Naive thymus-derived CD4-positive, alpha-beta T cell (primary cell): ENCODE measurements at regions of chr11 and their contacts with region 1.

Region 1: GRCh38 chr11:74069147-74070047 is 60.5 kb upstream of the UCP3 start:
- DNase-seq: no peak
- ATAC-seq: no peak
- H3K4me3 ChIP-seq: no peak overlapping the region
- H3K4me3 Mint-ChIP-seq: no peak overlapping the region
- H3K27ac ChIP-seq: no peak overlapping the region
- H3K27ac Mint-ChIP-seq: peak overlapping the region in 1 of 9 donors; percentile 39
- H3K4me1 ChIP-seq: no peaks in the 10 kb centered on the region
- H3K4me1 Mint-ChIP-seq: peaks cover 0 to 12% (median 5%) of the 10 kb centered on the region in 7 donors
- H3K27me3 ChIP-seq: no peaks in the 10 kb centered on the region
- H3K27me3 Mint-ChIP-seq: no peaks in the 10 kb centered on the region

Region 2: DNA sequence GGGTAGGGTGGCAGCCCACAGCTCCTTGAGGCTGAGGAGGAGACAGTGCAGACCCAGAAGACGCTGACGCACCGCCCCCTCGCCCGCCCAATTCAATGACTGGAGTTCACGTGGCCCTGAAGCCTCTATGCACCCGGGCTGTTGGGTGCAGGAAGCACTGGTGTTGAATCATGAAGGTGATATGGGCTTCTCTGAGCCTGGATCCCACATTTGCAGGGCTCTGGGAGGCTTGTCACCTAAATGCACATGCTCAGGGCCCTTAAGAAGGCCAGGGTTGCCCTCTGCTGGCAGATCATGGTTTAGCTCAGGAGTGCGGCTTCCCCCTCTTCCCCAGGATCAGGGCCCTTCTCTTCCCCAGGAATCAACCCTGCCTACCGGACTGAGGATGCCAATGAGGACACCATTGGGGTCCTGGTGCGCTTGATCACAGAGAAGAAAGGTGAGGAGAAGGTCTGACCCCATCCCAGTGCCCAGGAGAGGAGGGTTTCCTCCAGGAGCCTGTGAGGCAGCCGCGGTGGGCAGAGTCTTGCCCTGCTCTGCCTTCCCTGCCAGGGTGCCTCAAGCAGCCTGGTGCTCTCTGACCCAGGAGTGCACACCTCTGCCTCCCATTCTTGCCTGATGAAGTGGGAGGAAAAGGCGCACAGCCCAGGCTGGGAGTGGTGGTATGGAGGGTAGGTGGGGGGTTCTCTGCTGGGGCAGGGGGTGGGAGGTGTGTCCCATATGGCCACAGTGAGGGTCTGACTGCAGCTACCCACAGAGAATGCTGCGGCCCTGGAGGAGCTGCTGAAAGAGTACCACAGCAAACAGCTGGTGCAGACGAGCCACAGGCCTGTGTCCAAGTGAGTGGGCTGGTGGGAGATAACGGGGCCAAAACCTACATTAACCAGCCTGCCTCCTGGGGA is 675.7 kb before region 1 on chr11:
- CTCF ChIA-PET with region 1: interaction called, 10 read pairs
- POLR2A ChIA-PET with region 1: no interaction called
- intact Hi-C with region 1: no loop called
- DNase-seq: peak; percentile 43 to 74 (median 62)
- ATAC-seq: peak; percentile 69
- H3K4me3 ChIP-seq: no peak overlapping the region
- H3K4me3 Mint-ChIP-seq: peak overlapping the region in 1 of 10 donors; percentile 9
- H3K27ac ChIP-seq: no peak overlapping the region
- H3K27ac Mint-ChIP-seq: peak overlapping the region in 7 of 9 donors; percentile 14 to 75 (median 56)
- H3K4me1 ChIP-seq: no peaks in the 10 kb centered on the region
- H3K4me1 Mint-ChIP-seq: peaks cover 0 to 21% (median 5%) of the 10 kb centered on the region in 7 donors
- H3K27me3 ChIP-seq: no peaks in the 10 kb centered on the region
- H3K27me3 Mint-ChIP-seq: no peaks in the 10 kb centered on the region

Region 3: GRCh38 chr11:73921180-73921579 is 148.2 kb before region 1 on chr11:
- CTCF ChIA-PET with region 1: no interaction called
- POLR2A ChIA-PET with region 1: no interaction called
- intact Hi-C with region 1: no loop called
- DNase-seq: no peak
- ATAC-seq: no peak
- H3K4me3 ChIP-seq: no peak overlapping the region
- H3K4me3 Mint-ChIP-seq: no peak overlapping the region
- H3K27ac ChIP-seq: no peak overlapping the region
- H3K27ac Mint-ChIP-seq: peak overlapping the region in 1 of 9 donors; percentile 5
- H3K4me1 ChIP-seq: no peaks in the 10 kb centered on the region
- H3K4me1 Mint-ChIP-seq: no peaks in the 10 kb centered on the region
- H3K27me3 ChIP-seq: no peaks in the 10 kb centered on the region
- H3K27me3 Mint-ChIP-seq: no peaks in the 10 kb centered on the region